ENCODE measurements at regions of chr22 and their contacts with region 1.

Region 1: GRCh38 chr22:17084554-17085276 is at the start of gene IL17RA:
- DNase-seq: peak; percentile 96
- H3K4me3 Mint-ChIP-seq: peak within 1 kb of the TSS; percentile 81
- H3K27ac Mint-ChIP-seq: peak within 1 kb of the TSS; percentile 77
- H3K4me1 Mint-ChIP-seq: peaks cover 50% of the 10 kb centered on the region
- H3K27me3 Mint-ChIP-seq: peaks cover 23% of the 10 kb centered on the region
- total RNA-seq, gene IL17RA: 37.8 to 38.7 TPM

Region 2: DNA sequence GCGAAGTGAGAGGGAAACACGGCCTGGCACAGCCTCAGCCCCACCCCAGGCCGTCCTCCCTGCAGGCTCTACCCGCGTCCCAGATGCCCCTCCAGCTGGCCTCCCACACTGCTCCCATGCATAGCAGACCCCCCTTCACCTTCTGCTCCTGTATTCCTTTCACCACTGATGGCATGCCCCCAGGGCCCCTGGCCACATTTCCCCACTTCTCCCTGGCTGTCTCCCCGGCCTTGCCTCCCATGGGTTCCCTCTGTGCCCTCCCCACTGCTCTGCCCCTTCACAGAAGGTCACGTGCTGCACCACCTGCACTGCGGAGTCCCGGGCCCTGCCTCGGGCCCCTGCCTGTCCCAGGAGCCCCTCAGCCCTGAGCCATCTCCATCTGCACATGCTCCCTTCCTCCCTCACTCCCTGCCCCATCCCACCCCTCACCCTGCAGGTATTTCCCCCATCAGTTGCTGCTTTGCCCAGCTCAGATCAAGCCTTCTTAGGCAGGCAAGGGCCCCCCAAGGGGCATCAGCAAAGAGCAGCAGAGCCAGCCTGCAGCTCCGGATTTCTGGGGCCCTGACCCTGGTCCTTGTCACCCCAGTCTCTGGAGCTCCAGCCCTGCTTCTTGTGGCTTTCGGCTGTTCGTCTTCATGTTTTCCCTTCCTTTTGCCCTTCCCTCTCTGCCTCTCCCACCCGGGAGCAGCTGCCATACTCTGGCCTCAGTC is 123.1 kb before region 1 on chr22:
- CTCF ChIA-PET with region 1: no interaction called
- POLR2A ChIA-PET with region 1: no interaction called
- DNase-seq: peak; percentile 9
- H3K4me3 Mint-ChIP-seq: no peak overlapping the region
- H3K27ac Mint-ChIP-seq: no peak overlapping the region
- H3K4me1 Mint-ChIP-seq: no peaks in the 10 kb centered on the region
- H3K27me3 Mint-ChIP-seq: no peaks in the 10 kb centered on the region

Region 3: GRCh38 chr22:17007257-17007656 is 77.5 kb before region 1 on chr22:
- CTCF ChIA-PET with region 1: no interaction called
- POLR2A ChIA-PET with region 1: no interaction called
- DNase-seq: no peak
- H3K4me3 Mint-ChIP-seq: no peak overlapping the region
- H3K27ac Mint-ChIP-seq: no peak overlapping the region
- H3K4me1 Mint-ChIP-seq: no peaks in the 10 kb centered on the region
- H3K27me3 Mint-ChIP-seq: peaks cover 24% of the 10 kb centered on the region

Region 4: DNA sequence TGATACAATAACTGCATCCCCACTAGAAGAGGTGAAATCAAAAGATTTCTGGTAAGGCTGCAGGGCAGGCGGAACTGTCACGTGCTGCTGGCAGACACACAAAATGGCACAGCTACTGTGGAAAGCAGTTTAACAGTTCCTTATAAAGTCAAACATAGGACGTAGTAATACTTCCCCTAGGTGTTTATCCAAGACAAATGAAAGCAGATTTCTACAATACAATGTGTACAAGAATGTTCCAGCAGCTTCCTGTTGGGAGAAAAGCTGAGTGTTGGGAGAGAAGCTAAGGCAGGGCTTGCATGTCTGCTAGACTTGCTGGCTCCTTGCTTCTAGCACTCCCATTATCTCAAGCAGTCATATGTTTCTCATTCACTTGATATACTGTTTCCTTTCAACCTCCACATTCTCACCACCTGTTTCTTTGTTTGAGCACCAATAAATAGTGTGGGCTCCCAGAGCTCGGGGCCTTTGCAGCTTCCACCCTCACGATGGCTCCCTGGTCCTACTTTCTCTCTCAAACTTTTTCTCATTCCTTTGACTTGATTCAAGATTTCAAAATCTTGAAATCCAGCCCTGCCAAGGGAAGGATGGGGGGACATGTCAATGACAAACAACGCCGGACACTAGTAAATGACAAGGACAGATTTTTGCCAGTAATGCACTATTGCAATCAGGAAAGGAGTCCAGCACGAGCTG is 21.2 kb before region 1 on chr22:
- CTCF ChIA-PET with region 1: no interaction called
- POLR2A ChIA-PET with region 1: no interaction called
- DNase-seq: no peak
- H3K4me3 Mint-ChIP-seq: no peak overlapping the region
- H3K27ac Mint-ChIP-seq: no peak overlapping the region
- H3K4me1 Mint-ChIP-seq: no peaks in the 10 kb centered on the region
- H3K27me3 Mint-ChIP-seq: peaks cover 24% of the 10 kb centered on the region

Region 5: GRCh38 chr22:17098379-17098819 is 13.7 kb after region 1 on chr22:
- CTCF ChIA-PET with region 1: interaction called, 3 read pairs
- POLR2A ChIA-PET with region 1: interaction called, 39 read pairs
- DNase-seq: peak; percentile 63
- H3K4me3 Mint-ChIP-seq: peak overlapping the region; percentile 38
- H3K27ac Mint-ChIP-seq: peak overlapping the region; percentile 82
- H3K4me1 Mint-ChIP-seq: peaks cover 66% of the 10 kb centered on the region
- H3K27me3 Mint-ChIP-seq: peaks cover 3% of the 10 kb centered on the region

Region 6: DNA sequence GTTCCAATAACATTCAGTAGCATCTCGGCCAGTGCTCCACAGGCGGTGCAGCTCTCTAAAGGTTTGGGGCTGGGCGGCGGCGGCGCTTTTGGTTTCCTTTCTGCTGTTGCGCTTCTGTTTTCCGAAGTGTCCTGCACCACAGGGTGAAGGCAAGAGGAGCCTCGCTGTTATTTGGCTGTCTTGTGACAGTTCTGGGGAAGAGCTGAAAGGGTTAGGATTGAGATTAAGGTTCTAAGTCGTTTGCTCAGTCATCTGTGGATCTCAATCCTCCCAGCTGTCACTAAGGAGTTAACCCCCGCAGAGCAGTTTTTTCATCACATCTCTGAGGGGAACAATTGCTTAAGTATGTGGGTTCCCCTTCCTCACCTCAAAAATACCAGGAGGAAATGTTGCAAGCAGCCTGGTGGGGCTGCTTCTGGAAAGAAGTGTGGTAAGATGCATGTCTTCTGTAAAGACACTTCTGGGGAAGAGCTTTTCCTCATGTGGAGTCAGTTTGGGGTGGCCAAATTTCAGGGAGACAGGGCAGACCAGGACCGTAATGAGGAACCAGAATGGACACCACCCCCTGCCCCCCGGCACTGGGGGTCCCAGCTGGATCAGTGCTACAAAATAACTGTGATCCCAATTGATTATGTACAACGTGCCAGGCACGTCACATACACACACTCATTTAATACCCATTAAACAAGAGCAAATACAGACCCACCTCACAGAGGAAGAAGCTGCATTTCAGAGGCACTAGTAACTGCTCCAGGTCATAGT is 22.3 kb after region 1 on chr22:
- CTCF ChIA-PET with region 1: no interaction called
- POLR2A ChIA-PET with region 1: interaction called, 10 read pairs
- DNase-seq: peak; percentile 66
- H3K4me3 Mint-ChIP-seq: peak overlapping the region; percentile 54
- H3K27ac Mint-ChIP-seq: peak overlapping the region; percentile 86
- H3K4me1 Mint-ChIP-seq: peaks cover 34% of the 10 kb centered on the region
- H3K27me3 Mint-ChIP-seq: no peaks in the 10 kb centered on the region

Measured in activated CD4-positive, alpha-beta memory T cell treated with anti-CD3 and anti-CD28 coated beads, Interleukin-2, amount 10 ng/mL, durations not matched to agents 7 days and 5 days (primary cell).